ENCODE measurements at regions of chr5 and their contacts with region 1.

Region 1: DNA sequence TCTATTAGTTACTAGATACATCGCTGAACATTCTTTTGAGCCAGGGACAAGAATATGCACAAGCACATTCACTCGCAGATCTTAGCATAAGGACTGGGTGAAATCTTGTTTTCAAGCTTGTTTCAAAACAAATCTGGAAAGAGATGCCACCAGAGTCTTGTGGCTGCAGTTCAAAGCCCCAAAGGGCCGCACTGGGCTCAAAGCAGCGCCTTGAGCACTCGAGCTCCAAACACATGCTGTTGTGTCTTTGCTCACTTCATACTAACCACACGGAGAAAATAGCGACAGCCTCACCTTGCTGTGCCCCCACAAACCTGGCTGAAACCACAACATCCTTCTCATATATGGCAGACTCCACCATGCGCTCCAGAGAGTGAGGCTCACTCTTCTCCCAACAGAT is 34.2 kb upstream of the IL7R start:
- DNase-seq: peak; percentile 78
- ATAC-seq: peak; percentile 68
- H3K4me3 Mint-ChIP-seq: peak overlapping the region; percentile 30
- H3K27ac Mint-ChIP-seq: peak overlapping the region; percentile 75
- H3K4me1 Mint-ChIP-seq: peaks cover 85% of the 10 kb centered on the region
- H3K27me3 Mint-ChIP-seq: no peaks in the 10 kb centered on the region

Region 2: GRCh38 chr5:35626108-35626507 is 196.4 kb before region 1 on chr5:
- CTCF ChIA-PET with region 1: no interaction called
- POLR2A ChIA-PET with region 1: no interaction called
- DNase-seq: no peak
- ATAC-seq: no peak
- H3K4me3 Mint-ChIP-seq: no peak overlapping the region
- H3K27ac Mint-ChIP-seq: no peak overlapping the region
- H3K4me1 Mint-ChIP-seq: peaks cover 6% of the 10 kb centered on the region
- H3K27me3 Mint-ChIP-seq: no peaks in the 10 kb centered on the region

Region 3: GRCh38 chr5:35811108-35811741 is 11.3 kb before region 1 on chr5:
- CTCF ChIA-PET with region 1: interaction called, 48 read pairs
- POLR2A ChIA-PET with region 1: interaction called, 20 read pairs
- DNase-seq: peak; percentile 61
- ATAC-seq: peak; percentile 80
- H3K4me3 Mint-ChIP-seq: peak overlapping the region; percentile 22
- H3K27ac Mint-ChIP-seq: peak overlapping the region; percentile 84
- H3K4me1 Mint-ChIP-seq: peaks cover 39% of the 10 kb centered on the region
- H3K27me3 Mint-ChIP-seq: no peaks in the 10 kb centered on the region

Region 4: DNA sequence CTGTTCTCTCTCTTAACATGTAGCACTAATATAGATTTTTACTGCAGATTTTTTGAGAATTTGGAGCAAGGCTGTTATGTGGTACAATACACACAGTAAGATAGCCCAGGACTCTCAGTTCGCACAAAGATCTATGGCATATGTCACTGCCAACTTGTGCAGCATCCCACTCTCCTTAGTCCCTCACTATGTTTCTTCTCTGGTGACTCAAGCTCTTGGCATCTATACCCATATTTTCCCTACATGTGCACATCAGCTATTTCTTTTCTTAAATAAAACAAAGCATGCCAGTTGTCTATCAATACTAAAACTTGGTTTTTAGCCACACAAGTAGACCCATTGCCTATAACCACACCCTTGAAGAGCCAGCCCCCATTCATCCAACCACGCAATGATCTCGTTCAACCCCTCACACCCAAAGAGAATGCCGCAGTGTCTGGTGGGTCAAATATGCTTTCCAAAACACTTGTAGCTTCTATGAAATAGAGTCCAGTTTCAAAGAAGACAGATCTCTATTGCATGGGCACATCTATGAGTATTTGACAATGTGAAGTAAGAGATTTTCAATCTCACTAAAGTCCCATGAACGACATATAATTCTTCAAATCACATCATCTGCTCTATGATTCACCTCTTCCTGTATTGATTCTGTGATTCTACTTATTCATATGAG is 16.0 kb after region 1 on chr5:
- CTCF ChIA-PET with region 1: interaction called, 36 read pairs
- POLR2A ChIA-PET with region 1: interaction called, 4 read pairs
- DNase-seq: no peak
- ATAC-seq: peak; percentile 38
- H3K4me3 Mint-ChIP-seq: no peak overlapping the region
- H3K27ac Mint-ChIP-seq: peak overlapping the region; percentile 23
- H3K4me1 Mint-ChIP-seq: peaks cover 51% of the 10 kb centered on the region
- H3K27me3 Mint-ChIP-seq: no peaks in the 10 kb centered on the region

Region 5: GRCh38 chr5:36029914-36030313 is 207.4 kb after region 1 on chr5:
- CTCF ChIA-PET with region 1: no interaction called
- POLR2A ChIA-PET with region 1: no interaction called
- DNase-seq: no peak
- ATAC-seq: no peak
- H3K4me3 Mint-ChIP-seq: no peak overlapping the region
- H3K27ac Mint-ChIP-seq: no peak overlapping the region
- H3K4me1 Mint-ChIP-seq: no peaks in the 10 kb centered on the region
- H3K27me3 Mint-ChIP-seq: peaks cover 2% of the 10 kb centered on the region